Activated CD4-positive, alpha-beta T cell treated with anti-CD3 and anti-CD28 coated beads for 36 hours (primary cell): ENCODE measurements at regions of chr7 and their contacts with region 1.

Region 1: GRCh38 chr7:1579481-1580421 is 9.9 kb upstream of the PSMG3 start:
- DNase-seq: peak; percentile 86
- ATAC-seq: peak; percentile 100
- H3K4me3 Mint-ChIP-seq: no peak overlapping the region
- H3K27ac Mint-ChIP-seq: no peak overlapping the region
- H3K4me1 Mint-ChIP-seq: peaks cover 4% of the 10 kb centered on the region
- H3K27me3 Mint-ChIP-seq: no peaks in the 10 kb centered on the region

Region 2: GRCh38 chr7:1709900-1710299 is 130.1 kb after region 1 on chr7:
- CTCF ChIA-PET with region 1: no interaction called
- POLR2A ChIA-PET with region 1: no interaction called
- intact Hi-C with region 1: loop called in 1 of 2 experiments (anchors 5 kb)
- DNase-seq: no peak
- ATAC-seq: no peak
- H3K4me3 Mint-ChIP-seq: no peak overlapping the region
- H3K27ac Mint-ChIP-seq: no peak overlapping the region
- H3K4me1 Mint-ChIP-seq: no peaks in the 10 kb centered on the region
- H3K27me3 Mint-ChIP-seq: no peaks in the 10 kb centered on the region

Region 3: DNA sequence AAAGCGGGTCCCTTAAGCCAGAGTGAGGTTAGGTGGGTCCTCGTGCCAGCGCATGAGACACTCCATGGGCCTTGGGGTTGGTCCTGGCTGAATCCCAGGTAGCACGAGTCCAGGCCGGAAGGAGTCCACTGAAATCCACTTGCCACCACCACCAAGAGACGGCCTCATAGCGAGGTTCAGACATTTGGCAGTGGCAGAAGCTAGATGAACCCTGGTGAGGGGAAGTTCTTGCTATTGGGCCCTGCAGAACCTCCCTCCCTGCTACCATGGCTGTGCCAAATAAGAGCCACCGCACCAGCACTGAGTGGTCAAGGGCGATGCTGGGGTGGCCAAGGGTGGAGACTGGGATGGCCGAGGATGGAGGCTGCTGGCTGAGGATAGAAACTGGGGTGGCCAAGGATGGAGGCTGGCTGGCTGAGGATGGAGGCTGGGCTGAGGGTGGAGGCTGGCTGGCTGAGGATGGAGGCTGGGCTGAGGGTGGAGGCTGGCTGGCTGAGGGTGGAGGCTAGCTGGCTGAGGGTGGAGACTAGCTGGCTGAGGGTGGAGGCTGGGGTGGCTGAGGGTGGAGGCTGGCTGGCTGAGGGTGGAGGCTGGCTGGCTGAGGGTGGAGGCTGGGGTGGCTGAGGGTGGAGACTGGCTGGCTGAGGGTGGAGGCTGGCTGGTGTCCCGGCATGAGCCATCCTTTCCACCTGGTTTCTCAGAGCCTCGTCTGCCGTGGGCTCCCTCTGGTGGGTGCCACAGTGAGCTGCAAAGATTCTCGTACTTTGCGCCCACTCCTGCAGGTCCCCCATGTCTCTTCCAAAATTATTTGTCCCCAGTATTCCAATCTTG is 178.5 kb after region 1 on chr7:
- CTCF ChIA-PET with region 1: interaction called, 3 read pairs
- POLR2A ChIA-PET with region 1: no interaction called
- intact Hi-C with region 1: loop called (anchors 1 to 10 kb)
- DNase-seq: peak; percentile 66
- ATAC-seq: peak; percentile 60
- H3K4me3 Mint-ChIP-seq: no peak overlapping the region
- H3K27ac Mint-ChIP-seq: no peak overlapping the region
- H3K4me1 Mint-ChIP-seq: peaks cover 3% of the 10 kb centered on the region
- H3K27me3 Mint-ChIP-seq: peaks cover 4% of the 10 kb centered on the region

Region 4: DNA sequence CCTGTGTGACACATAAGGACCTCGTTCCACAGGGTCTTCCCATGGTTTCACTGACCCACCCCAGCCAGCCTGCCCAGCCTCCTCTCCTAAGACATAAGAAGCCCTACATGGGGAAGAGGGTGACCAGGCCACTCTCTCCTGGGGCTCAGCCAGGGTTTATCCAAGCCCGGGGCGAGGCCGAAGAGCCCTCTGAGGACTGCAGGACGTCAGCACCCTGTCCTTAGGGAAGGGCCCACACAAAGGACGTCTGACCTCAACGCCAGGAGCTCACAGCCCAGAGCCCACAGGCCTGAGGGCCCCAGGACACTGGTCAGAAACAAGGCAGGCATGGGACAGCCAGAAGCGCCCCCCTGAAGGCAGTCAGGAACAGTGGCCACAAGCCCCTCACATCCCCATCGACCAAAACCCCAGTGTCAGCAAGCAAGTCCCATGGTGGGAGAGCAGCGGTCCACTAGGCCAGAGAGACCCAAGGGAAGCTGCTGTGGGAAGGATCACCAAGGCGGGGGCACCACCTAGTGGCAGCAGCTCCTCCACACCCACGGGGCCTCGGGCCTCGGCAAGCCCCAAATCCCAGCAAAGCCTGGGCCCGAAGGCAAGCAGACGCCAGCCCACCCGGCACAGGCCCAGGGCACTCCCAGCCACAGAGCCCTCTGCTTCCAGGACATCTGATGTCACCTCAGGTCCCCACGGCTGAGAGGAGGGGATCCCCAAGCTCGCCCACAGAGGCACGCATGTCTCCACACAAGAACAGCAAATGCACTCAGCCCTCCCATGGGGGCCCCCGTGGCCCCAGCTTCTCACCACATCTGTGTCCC is 629.6 kb after region 1 on chr7:
- CTCF ChIA-PET with region 1: no interaction called
- POLR2A ChIA-PET with region 1: no interaction called
- intact Hi-C with region 1: loop called in 1 of 2 experiments (anchors 1 kb)
- DNase-seq: peak; percentile 72
- ATAC-seq: no peak
- H3K4me3 Mint-ChIP-seq: no peak overlapping the region
- H3K27ac Mint-ChIP-seq: no peak overlapping the region
- H3K4me1 Mint-ChIP-seq: peaks cover 4% of the 10 kb centered on the region
- H3K27me3 Mint-ChIP-seq: no peaks in the 10 kb centered on the region

Region 5: GRCh38 chr7:2431260-2431867 is 851.6 kb after region 1 on chr7:
- CTCF ChIA-PET with region 1: interaction called, 3 read pairs
- POLR2A ChIA-PET with region 1: no interaction called
- intact Hi-C with region 1: loop called in 1 of 2 experiments (anchors 1 kb)
- DNase-seq: peak; percentile 68
- ATAC-seq: peak; percentile 76
- H3K4me3 Mint-ChIP-seq: no peak overlapping the region
- H3K27ac Mint-ChIP-seq: no peak overlapping the region
- H3K4me1 Mint-ChIP-seq: peaks cover 5% of the 10 kb centered on the region
- H3K27me3 Mint-ChIP-seq: no peaks in the 10 kb centered on the region